Vagina (tissue), 2 donors: ENCODE measurements at regions of chr17 and their contacts with region 1.

Region 1: DNA sequence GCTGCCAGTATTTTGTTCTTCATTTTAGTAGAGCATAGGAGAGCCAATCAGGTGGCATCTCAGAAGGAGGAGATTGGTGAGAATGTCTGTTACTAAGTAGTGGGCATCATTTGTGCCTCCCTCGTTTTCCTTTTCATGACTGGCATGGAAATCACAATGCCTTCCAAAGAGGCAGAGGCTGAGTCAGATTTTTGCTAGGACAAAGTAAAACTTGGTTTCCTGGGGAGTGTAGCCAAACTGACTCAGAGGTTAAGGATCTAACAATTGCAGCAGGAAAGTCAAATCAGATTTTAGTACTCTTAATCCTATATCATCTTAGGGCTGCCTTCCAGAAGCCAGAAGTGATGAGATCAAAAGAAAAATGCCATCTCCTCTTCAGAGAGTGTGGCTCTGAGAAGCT is 138.7 kb downstream of the ANKFN1 start:
- DNase-seq: no peak
- H3K4me3 ChIP-seq: no peak overlapping the region
- H3K27ac ChIP-seq: peak overlapping the region; percentile 65
- H3K4me1 ChIP-seq: peaks cover 33% of the 10 kb centered on the region
- H3K27me3 ChIP-seq: no peaks in the 10 kb centered on the region
- CTCF ChIP-seq: no peak
- POLR2A ChIP-seq: no peak

Region 2: DNA sequence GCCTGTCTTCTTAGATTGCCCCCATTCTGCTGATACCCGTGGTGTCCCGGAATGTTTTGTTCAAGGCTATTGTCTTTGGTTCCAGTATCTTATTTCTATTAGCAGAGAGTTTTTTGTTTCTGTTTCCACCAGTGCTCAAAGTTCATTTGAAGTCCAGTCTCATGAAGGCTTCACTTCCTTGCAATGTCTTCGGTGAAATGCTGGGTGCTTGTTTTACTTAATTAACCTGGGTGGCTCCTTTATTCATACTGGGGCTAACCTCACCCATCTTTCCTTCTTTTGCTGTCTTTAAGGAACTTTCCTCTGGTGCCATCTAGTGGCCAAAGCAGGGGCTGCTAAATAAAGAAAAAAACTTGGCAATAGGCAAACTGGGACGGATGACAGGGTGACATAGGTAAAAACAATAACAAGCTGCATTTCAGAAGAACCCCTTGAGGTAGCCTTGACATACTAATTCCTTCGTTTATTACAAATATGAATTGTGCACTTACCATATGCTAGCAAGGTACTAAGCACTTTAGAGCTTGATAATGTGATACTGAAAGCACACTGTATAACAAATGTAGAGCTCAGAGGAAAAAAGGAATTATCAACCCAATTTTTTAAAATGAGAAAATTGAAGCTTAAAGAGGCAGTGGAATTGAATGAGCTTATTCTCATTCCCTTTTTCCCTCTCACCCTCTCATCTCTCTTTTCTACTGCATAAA is 778.0 kb before region 1 on chr17:
- intact Hi-C with region 1: loop called (anchors 5 kb)
- DNase-seq: no peak
- H3K4me3 ChIP-seq: no peak overlapping the region
- H3K27ac ChIP-seq: no peak overlapping the region
- H3K4me1 ChIP-seq: no peaks in the 10 kb centered on the region
- H3K27me3 ChIP-seq: no peaks in the 10 kb centered on the region
- CTCF ChIP-seq: peak; percentile 72 to 90 (median 79)
- POLR2A ChIP-seq: no peak